Posterior vena cava (tissue), 2 donors: ENCODE measurements at regions of chr11 and their contacts with region 1.

Region 1: DNA sequence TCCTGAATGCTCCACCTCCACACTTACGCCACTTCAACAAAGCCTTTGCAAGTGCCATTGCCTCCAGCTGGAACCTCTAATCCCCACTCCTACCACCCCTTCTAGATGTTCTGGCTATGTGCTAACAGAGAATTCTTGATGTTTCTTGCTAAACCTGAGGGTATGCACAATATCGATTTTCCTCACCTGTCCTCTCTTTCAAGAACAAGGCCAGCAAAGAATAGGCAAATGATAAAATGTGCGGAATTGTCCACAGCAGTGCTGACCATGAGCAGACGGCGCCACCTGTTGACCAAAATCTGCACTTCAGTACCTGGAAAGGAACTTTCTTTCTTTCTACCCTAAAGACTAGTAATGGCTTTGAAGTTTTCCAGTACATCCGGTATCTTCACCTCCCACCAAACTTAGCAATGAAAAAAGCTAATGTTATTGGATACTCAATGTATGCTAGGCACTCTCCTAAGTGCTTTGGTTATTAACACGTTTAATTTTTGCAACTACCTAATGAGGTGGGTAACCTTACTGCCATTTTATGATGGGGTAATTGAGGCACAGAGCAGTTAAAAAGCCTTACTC is 3.4 kb downstream of the TIMM10 start:
- DNase-seq: peak; percentile 89

Region 2: GRCh38 chr11:57311109-57311936 is 215.8 kb before region 1 on chr11:
- intact Hi-C with region 1: no loop called
- DNase-seq: peak; percentile 97

Region 3: DNA sequence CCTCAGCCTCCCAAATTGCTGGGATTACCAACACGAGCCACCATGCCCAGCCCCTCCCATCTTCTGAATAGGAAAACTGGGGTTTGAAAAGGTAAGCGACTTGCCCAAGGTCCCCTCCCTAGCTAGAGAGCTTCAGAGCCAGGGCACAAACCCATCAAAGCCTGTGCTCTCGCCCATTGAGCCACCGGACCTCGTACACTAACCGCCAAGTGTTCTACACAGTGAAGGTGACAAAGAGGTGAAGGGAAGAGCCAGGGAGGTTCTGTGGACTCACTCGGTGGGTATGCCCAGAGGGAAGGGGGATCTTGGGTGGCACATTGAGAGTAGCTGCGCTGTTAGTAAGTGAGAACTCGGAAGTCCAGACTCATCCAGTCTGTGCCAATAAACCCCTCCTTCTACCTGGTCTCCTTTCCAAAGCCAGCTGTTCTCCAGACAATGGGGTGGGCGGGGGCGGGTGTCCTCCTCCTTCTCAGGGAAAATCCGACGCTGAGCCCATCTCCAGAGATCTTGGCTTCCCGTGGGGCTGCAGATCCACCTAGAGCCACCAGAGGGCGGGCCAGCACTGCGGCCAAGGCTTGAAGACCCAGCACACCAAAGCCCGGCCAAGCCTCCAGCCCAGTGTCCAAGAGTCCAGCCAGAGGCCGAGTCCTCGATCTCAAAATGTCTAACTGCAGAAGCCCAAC is 70.0 kb before region 1 on chr11:
- intact Hi-C with region 1: loop called (anchors 2 to 10 kb)
- DNase-seq: peak; percentile 98

Region 4: GRCh38 chr11:57493507-57494503 is 33.3 kb before region 1 on chr11:
- intact Hi-C with region 1: loop called in 1 of 2 experiments (anchors 5 kb)
- DNase-seq: no peak